SK-MEL-5 (cell line): ENCODE measurements at regions of chr17 and their contacts with region 1.

Region 1: GRCh38 chr17:79563237-79564013 is 47.4 kb downstream of the RBFOX3 start:
- DNase-seq: no peak

Region 2: GRCh38 chr17:79658811-79659207 is 95.4 kb after region 1 on chr17:
- in situ Hi-C with region 1: loop called (anchors 25 kb)
- DNase-seq: peak; percentile 80